ENCODE measurements at regions of chr1 and their contacts with region 1.

Region 1: GRCh38 chr1:54996359-54996868 is 2.3 kb upstream of the BSND start:
- DNase-seq: peak; percentile 90
- ATAC-seq: peak; percentile 73
- H3K4me3 Mint-ChIP-seq: peak overlapping the region; percentile 62
- H3K27ac Mint-ChIP-seq: peak overlapping the region; percentile 79
- H3K4me1 Mint-ChIP-seq: peaks cover 26% of the 10 kb centered on the region
- H3K27me3 Mint-ChIP-seq: peaks cover 44% of the 10 kb centered on the region

Region 2: GRCh38 chr1:54950369-54951163 is 45.8 kb before region 1 on chr1:
- POLR2A ChIA-PET with region 1: interaction called, 12 read pairs
- DNase-seq: peak; percentile 56
- ATAC-seq: peak; percentile 61
- H3K4me3 Mint-ChIP-seq: no peak overlapping the region
- H3K27ac Mint-ChIP-seq: no peak overlapping the region
- H3K4me1 Mint-ChIP-seq: peaks cover 12% of the 10 kb centered on the region
- H3K27me3 Mint-ChIP-seq: peaks cover 6% of the 10 kb centered on the region

Region 3: DNA sequence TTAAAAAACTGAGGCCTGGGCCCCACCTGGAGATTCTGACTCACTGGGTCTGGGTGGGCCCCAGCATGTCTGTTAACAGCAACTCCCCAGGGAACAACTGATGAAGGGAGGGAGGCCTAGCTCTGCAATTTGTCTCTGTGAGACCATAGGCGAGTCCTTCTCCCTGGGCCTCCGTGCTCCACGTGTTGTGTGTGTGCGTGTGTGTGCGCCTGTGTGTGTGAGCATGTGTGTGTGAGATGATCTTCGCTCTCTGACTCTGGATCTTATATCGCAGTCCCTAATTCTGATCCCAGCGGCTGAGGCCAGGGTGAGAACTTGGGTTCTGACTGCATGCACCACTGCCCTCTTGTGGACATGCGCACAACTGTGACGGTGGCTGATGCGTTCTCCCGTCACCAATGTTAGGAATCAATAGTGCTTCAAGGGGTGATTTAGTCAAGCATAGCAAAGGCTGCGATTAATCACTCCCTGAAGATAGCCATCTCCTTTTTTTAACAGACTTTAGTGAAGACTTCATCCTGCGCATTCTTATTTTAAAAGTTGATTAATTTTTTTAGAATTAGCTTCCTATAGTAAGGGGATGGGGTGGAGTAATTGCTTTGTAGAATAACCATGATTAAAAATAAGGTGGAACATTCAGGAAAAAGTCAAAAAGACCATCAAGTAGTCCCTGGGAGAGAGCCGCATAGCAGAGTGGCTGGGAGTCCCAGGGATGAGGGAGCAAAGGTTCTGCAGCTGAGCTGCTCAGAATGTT is 281.1 kb after region 1 on chr1:
- POLR2A ChIA-PET with region 1: no interaction called
- DNase-seq: peak; percentile 79
- ATAC-seq: peak; percentile 92
- H3K4me3 Mint-ChIP-seq: no peak overlapping the region
- H3K27ac Mint-ChIP-seq: peak overlapping the region; percentile 35
- H3K4me1 Mint-ChIP-seq: peaks cover 19% of the 10 kb centered on the region
- H3K27me3 Mint-ChIP-seq: peaks cover 17% of the 10 kb centered on the region

Measured in activated naive CD8-positive, alpha-beta T cell treated with anti-CD3 and anti-CD28 coated beads, Interleukin-2, amount 10 ng/mL, durations not matched to agents 7 days and 5 days (primary cell).